Caco-2 (cell line): ENCODE measurements at regions of chr2 and their contacts with region 1.

Region 1: GRCh38 chr2:129877289-129877779 is 102.1 kb upstream of the RAB6C start:
- DNase-seq: peak; percentile 80 to 93
- H3K4me3 ChIP-seq: peak overlapping the region; percentile 90
- H3K4me3 Mint-ChIP-seq: peak overlapping the region; percentile 94
- H3K27ac Mint-ChIP-seq: peak overlapping the region; percentile 57
- H3K4me1 ChIP-seq: 0 out of 2 replicates have a peak, but pooled peaks cover 3% of the 10 kb centered on the region
- H3K4me1 Mint-ChIP-seq: peaks cover 7% of the 10 kb centered on the region
- H3K27me3 ChIP-seq: no peaks in the 10 kb centered on the region
- H3K27me3 Mint-ChIP-seq: peaks cover 15% of the 10 kb centered on the region
- CTCF ChIP-seq: no peak

Region 2: GRCh38 chr2:129518937-129519336 is 358.4 kb before region 1 on chr2:
- CTCF ChIA-PET with region 1: no interaction called
- POLR2A ChIA-PET with region 1: no interaction called
- intact Hi-C with region 1: no loop called
- DNase-seq: no peak
- H3K4me3 ChIP-seq: no peak overlapping the region
- H3K4me3 Mint-ChIP-seq: no peak overlapping the region
- H3K27ac Mint-ChIP-seq: no peak overlapping the region
- H3K4me1 ChIP-seq: no peaks in the 10 kb centered on the region
- H3K4me1 Mint-ChIP-seq: no peaks in the 10 kb centered on the region
- H3K27me3 ChIP-seq: no peaks in the 10 kb centered on the region
- H3K27me3 Mint-ChIP-seq: peaks cover 13% of the 10 kb centered on the region
- CTCF ChIP-seq: no peak

Region 3: GRCh38 chr2:129859175-129859574 is 18.2 kb before region 1 on chr2:
- CTCF ChIA-PET with region 1: no interaction called
- POLR2A ChIA-PET with region 1: no interaction called
- intact Hi-C with region 1: loop called (anchors 2 kb)
- DNase-seq: no peak
- H3K4me3 ChIP-seq: no peak overlapping the region
- H3K4me3 Mint-ChIP-seq: no peak overlapping the region
- H3K27ac Mint-ChIP-seq: no peak overlapping the region
- H3K4me1 ChIP-seq: no peaks in the 10 kb centered on the region
- H3K4me1 Mint-ChIP-seq: no peaks in the 10 kb centered on the region
- H3K27me3 ChIP-seq: no peaks in the 10 kb centered on the region
- H3K27me3 Mint-ChIP-seq: peaks cover 6% of the 10 kb centered on the region
- CTCF ChIP-seq: no peak